ENCODE measurements at regions of chr9 and their contacts with region 1.

Region 1: DNA sequence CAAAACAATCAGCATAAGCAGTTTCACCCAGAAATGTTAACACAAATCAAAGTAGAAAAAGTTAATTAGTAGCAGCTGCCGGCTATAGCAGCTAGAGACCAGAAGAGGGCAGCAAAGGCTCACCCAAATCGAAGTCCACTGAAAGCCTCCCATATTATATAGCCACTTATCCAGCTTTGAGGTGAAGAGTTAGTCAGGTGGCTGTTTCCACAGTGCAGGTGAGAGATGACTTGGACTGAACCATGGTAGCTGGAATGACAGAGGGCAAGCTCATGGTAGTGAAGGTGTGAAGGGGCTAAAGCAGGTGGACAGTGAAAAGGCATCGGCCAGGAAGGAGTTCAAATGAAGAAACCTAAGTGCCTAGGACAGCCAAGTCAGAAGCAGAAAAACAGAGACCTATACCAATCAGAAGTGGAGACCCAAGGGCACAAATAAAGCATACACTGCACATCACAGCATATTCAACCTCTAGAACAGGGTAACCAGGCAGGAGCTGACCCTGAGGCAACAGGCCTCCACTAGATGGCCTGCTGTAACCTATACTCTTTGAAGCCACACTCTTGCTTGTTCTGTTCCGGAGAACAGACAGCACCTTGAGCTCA is 7.2 kb upstream of the RNF38 start:
- DNase-seq: peak; percentile 50
- ATAC-seq: peak; percentile 93
- H3K4me3 ChIP-seq: no peak overlapping the region
- H3K27ac ChIP-seq: no peak overlapping the region
- H3K4me1 ChIP-seq: no peaks in the 10 kb centered on the region
- H3K27me3 ChIP-seq: no peaks in the 10 kb centered on the region
- CTCF ChIP-seq: peak; percentile 81 to 95 (median 89)
- POLR2A ChIP-seq: no peak
- RAD21 ChIP-seq: peak; percentile 93

Region 2: GRCh38 chr9:36441966-36442365 is 34.7 kb after region 1 on chr9:
- CTCF ChIA-PET with region 1: interaction called, 22 read pairs
- POLR2A ChIA-PET with region 1: no interaction called
- RAD21 ChIA-PET with region 1: no interaction called
- intact Hi-C with region 1: no loop called
- DNase-seq: no peak
- ATAC-seq: no peak
- H3K4me3 ChIP-seq: no peak overlapping the region
- H3K27ac ChIP-seq: no peak overlapping the region
- H3K4me1 ChIP-seq: no peaks in the 10 kb centered on the region
- H3K27me3 ChIP-seq: no peaks in the 10 kb centered on the region
- CTCF ChIP-seq: no peak
- POLR2A ChIP-seq: no peak
- RAD21 ChIP-seq: no peak

Region 3: GRCh38 chr9:36461323-36461722 is 54.1 kb after region 1 on chr9:
- CTCF ChIA-PET with region 1: interaction called, 119 read pairs
- POLR2A ChIA-PET with region 1: no interaction called
- RAD21 ChIA-PET with region 1: no interaction called
- intact Hi-C with region 1: no loop called
- DNase-seq: no peak
- ATAC-seq: no peak
- H3K4me3 ChIP-seq: no peak overlapping the region
- H3K27ac ChIP-seq: no peak overlapping the region
- H3K4me1 ChIP-seq: no peaks in the 10 kb centered on the region
- H3K27me3 ChIP-seq: no peaks in the 10 kb centered on the region
- CTCF ChIP-seq: no peak
- POLR2A ChIP-seq: no peak
- RAD21 ChIP-seq: no peak

Region 4: GRCh38 chr9:36728651-36729520 is 321.7 kb after region 1 on chr9:
- CTCF ChIA-PET with region 1: interaction called, 39 read pairs
- POLR2A ChIA-PET with region 1: no interaction called
- RAD21 ChIA-PET with region 1: interaction called, 7 to 12 read pairs
- intact Hi-C with region 1: loop called (anchors 1 kb)
- DNase-seq: peak; percentile 57
- ATAC-seq: peak; percentile 96
- H3K4me3 ChIP-seq: no peak overlapping the region
- H3K27ac ChIP-seq: no peak overlapping the region
- H3K4me1 ChIP-seq: no peaks in the 10 kb centered on the region
- H3K27me3 ChIP-seq: no peaks in the 10 kb centered on the region
- CTCF ChIP-seq: peak; percentile 83 to 93 (median 91)
- POLR2A ChIP-seq: no peak
- RAD21 ChIP-seq: peak; percentile 91

Measured in HCT116 (cell line).